ENCODE measurements at regions of chr18 and their contacts with region 1.

Region 1: DNA sequence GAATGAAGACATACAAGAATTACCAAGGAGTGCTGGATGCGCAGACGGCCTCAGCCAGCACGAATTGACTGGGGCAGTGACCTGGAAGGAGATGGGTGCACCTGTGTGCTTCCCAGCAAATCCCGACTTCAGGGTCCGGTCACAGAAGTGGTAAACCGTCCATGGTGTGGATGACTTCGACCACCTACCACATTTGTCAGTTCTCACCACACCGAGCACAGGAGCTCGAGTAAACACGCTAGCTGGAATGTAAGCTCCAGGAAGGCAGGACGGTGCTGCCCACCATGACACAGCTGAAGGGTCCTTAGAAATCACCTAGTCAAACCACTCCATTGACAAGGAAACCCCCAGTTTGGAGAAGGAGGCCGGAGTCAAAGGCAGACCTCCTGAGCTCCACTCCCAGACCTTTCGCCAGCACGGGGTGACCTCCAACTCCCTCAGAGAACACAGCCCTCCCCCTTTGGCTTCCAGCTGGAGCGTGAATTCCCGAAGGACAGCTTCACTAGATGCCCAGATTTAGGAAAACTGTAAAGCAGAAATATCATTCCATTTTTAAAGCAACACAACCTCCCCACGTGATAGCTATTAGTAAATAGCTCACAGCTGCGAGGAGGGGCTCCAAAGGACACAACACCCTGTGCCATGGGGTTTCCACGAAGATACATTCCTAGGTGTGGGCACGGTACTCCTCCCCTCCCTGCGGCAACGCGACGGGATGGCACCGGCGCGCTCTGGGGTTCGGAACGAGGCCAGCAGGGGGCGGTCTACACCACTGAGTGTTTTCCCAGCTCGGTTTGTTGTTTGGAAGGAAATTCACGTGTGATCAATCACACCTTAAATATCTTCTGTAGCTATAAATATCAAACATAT is 34.1 kb upstream of the GNAL start:
- DNase-seq: peak; percentile 68

Region 2: DNA sequence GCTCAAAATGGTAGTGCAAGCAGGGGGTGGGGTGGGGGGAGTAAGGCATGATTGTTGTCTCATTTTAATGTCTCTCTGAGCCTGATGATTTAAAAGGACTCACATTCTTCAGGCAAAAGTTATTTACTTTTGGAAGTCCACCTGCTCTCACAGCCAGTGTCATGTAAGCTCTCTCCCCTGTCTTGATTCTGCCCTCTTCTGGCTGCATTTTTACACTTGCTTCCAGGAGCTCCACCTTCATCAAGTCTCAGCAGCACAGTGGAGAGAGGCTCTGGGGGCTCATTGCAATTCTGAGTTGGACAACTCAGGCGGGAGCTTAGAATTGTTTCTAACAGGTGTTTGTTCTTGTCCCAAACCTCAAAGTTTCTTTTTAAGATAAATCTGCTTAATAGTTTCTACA is 73.3 kb after region 1 on chr18:
- CTCF ChIA-PET with region 1: interaction called, 23 read pairs
- POLR2A ChIA-PET with region 1: no interaction called
- DNase-seq: peak; percentile 15

Region 3: GRCh38 chr18:11908182-11909060 is 253.4 kb after region 1 on chr18 and contains the start of gene MPPE1:
- CTCF ChIA-PET with region 1: no interaction called
- POLR2A ChIA-PET with region 1: no interaction called
- DNase-seq: peak; percentile 79